ENCODE measurements at regions of chr2 and their contacts with region 1.

Region 1: GRCh38 chr2:230160112-230160660 is 59.6 kb downstream of the SP110 start:
- DNase-seq: peak; percentile 37 to 53 (median 52)
- ATAC-seq: peak; percentile 75
- H3K4me3 ChIP-seq: no peak overlapping the region
- H3K27ac ChIP-seq: no peak overlapping the region
- H3K4me1 ChIP-seq: peaks cover 0 to 2% of the 10 kb centered on the region in 2 experiments; a peak in 2 of 5 replicates
- H3K27me3 ChIP-seq: no peaks in the 10 kb centered on the region
- CTCF ChIP-seq: peak; percentile 55 to 69 (median 62)
- EP300 ChIP-seq: no peak
- POLR2A ChIP-seq: no peak
- RAD21 ChIP-seq: peak; percentile 24 to 55; a peak in 2 of 4 replicates

Region 2: DNA sequence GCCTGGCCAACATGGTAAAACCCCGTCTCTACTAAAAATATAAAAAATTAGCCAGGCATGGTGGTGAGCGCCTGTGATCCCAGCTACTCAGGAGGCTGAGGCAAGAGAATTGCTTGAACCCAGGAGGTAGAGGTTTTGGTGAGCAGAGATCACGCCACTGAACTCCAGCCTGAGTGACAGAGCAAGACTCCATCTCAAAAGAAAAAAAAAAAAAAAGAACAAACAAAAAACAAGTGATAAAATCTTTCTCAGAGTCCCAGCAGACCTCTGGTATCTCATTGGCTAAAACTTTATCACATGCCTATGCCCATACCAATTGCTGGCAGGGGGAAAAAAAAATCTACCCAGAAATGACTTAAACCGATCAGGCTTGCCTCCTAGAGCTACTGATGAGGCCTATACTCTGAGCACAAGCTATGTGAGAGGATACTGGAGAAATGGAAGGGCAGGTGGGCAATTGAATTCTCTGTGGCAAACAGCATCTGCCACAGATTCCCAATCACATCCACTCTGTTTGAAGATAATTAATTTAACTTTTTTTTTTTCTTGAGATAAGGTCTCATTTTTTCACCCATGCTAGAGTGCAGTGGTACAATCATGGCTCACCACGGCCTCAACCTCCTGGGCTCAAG is 188.9 kb before region 1 on chr2:
- CTCF ChIA-PET with region 1: no interaction called
- POLR2A ChIA-PET with region 1: no interaction called
- in situ Hi-C with region 1: no loop called
- intact Hi-C with region 1: no loop called
- DNase-seq: no peak
- ATAC-seq: peak; percentile 33; the same call in 1 of the 3 replicates
- H3K4me3 ChIP-seq: no peak overlapping the region
- H3K27ac ChIP-seq: no peak overlapping the region
- H3K4me1 ChIP-seq: no peaks in the 10 kb centered on the region; a peak in 1 of 5 replicates
- H3K27me3 ChIP-seq: no peaks in the 10 kb centered on the region
- CTCF ChIP-seq: no peak
- EP300 ChIP-seq: no peak
- POLR2A ChIP-seq: no peak
- RAD21 ChIP-seq: no peak

Region 3: GRCh38 chr2:230068016-230068650 is 92.1 kb before region 1 on chr2:
- CTCF ChIA-PET with region 1: no interaction called
- POLR2A ChIA-PET with region 1: no interaction called
- in situ Hi-C with region 1: no loop called
- intact Hi-C with region 1: loop called (anchors 2 kb)
- DNase-seq: no peak
- ATAC-seq: no peak
- H3K4me3 ChIP-seq: no peak overlapping the region
- H3K27ac ChIP-seq: no peak overlapping the region
- H3K4me1 ChIP-seq: peaks cover 0 to 11% of the 10 kb centered on the region in 2 experiments; a peak in 3 of 5 replicates
- H3K27me3 ChIP-seq: peaks cover 0 to 35% of the 10 kb centered on the region in 2 experiments; a peak in 2 of 5 replicates
- CTCF ChIP-seq: no peak
- EP300 ChIP-seq: no peak
- POLR2A ChIP-seq: no peak
- RAD21 ChIP-seq: no peak

Measured in K562 (cell line).